ENCODE measurements at regions of chr5 and their contacts with region 1.

Region 1: GRCh38 chr5:144844086-144844485 is 673.4 kb downstream of the KCTD16 start:
- DNase-seq: no peak
- ATAC-seq: no peak
- H3K4me3 ChIP-seq: no peak overlapping the region
- H3K4me3 Mint-ChIP-seq: no peak overlapping the region
- H3K27ac ChIP-seq: no peak overlapping the region
- H3K27ac Mint-ChIP-seq: no peak overlapping the region
- H3K4me1 ChIP-seq: no peaks in the 10 kb centered on the region
- H3K4me1 Mint-ChIP-seq: no peaks in the 10 kb centered on the region
- H3K27me3 ChIP-seq: no peaks in the 10 kb centered on the region
- H3K27me3 Mint-ChIP-seq: no peaks in the 10 kb centered on the region
- CTCF ChIP-seq: no peak

Region 2: DNA sequence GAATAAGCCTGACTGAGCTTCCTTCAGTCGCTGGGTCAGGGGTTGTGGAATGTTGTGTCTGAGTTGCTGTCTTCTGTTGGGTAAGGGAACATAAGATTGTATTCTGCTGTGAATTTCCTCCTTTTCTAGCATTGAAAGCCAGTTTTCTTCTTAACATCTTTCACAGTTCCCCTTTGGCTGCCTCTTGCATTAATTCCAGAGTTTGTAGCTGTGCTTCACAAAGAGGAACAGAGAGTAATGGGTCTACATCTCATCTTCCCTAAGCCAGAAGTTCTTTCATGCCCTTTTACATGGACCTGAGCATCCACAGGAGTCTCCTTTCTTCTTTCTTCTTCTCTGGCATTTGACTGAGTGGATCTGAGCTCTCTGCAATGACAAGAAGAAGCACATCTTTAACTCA is 13.4 kb after region 1 on chr5:
- CTCF ChIA-PET with region 1: no interaction called
- POLR2A ChIA-PET with region 1: no interaction called
- intact Hi-C with region 1: loop called in 1 of 2 experiments (anchors 1 kb)
- DNase-seq: no peak
- ATAC-seq: no peak
- H3K4me3 ChIP-seq: no peak overlapping the region
- H3K4me3 Mint-ChIP-seq: no peak overlapping the region
- H3K27ac ChIP-seq: no peak overlapping the region
- H3K27ac Mint-ChIP-seq: no peak overlapping the region
- H3K4me1 ChIP-seq: no peaks in the 10 kb centered on the region
- H3K4me1 Mint-ChIP-seq: no peaks in the 10 kb centered on the region
- H3K27me3 ChIP-seq: no peaks in the 10 kb centered on the region
- H3K27me3 Mint-ChIP-seq: no peaks in the 10 kb centered on the region
- CTCF ChIP-seq: no peak

Region 3: DNA sequence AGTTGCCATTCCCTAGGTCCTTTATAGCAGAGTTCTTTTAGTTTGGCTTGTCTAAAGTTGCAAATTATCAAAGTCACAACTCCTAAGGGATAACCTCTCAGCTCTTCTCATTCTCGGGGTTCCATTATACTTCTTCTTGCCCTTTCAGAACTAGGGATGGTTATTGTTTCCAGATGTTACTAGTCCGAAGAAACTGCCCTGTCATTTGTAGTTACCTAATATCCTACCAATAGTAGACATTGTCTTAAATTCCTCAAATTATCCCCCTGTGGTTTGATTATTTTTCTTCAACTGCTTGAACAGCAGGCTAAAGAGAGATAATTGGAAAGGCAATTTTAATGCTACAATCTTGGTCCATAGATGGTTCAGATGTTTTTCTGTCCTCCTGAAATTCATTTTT is 36.4 kb after region 1 on chr5:
- CTCF ChIA-PET with region 1: no interaction called
- POLR2A ChIA-PET with region 1: no interaction called
- intact Hi-C with region 1: no loop called
- DNase-seq: no peak
- ATAC-seq: no peak
- H3K4me3 ChIP-seq: no peak overlapping the region
- H3K4me3 Mint-ChIP-seq: no peak overlapping the region
- H3K27ac ChIP-seq: no peak overlapping the region
- H3K27ac Mint-ChIP-seq: no peak overlapping the region
- H3K4me1 ChIP-seq: no peaks in the 10 kb centered on the region
- H3K4me1 Mint-ChIP-seq: no peaks in the 10 kb centered on the region
- H3K27me3 ChIP-seq: no peaks in the 10 kb centered on the region
- H3K27me3 Mint-ChIP-seq: no peaks in the 10 kb centered on the region
- CTCF ChIP-seq: no peak